Panc1 (cell line): ENCODE measurements at regions of chr18 and their contacts with region 1.

Region 1: GRCh38 chr18:78138983-78139496 is 840.6 kb upstream of the SALL3 start:
- DNase-seq: no peak
- ATAC-seq: no peak
- H3K4me3 ChIP-seq: no peak overlapping the region
- H3K27ac ChIP-seq: no peak overlapping the region
- H3K4me1 ChIP-seq: no peaks in the 10 kb centered on the region
- H3K27me3 ChIP-seq: peaks cover 2% of the 10 kb centered on the region; the same call in 1 of the 2 replicates
- CTCF ChIP-seq: no peak

Region 2: GRCh38 chr18:78153362-78153761 is 14.3 kb after region 1 on chr18:
- CTCF ChIA-PET with region 1: no interaction called
- POLR2A ChIA-PET with region 1: no interaction called
- in situ Hi-C with region 1: no loop called
- intact Hi-C with region 1: no loop called
- DNase-seq: no peak
- ATAC-seq: no peak
- H3K4me3 ChIP-seq: no peak overlapping the region
- H3K27ac ChIP-seq: no peak overlapping the region
- H3K4me1 ChIP-seq: no peaks in the 10 kb centered on the region
- H3K27me3 ChIP-seq: no peaks in the 10 kb centered on the region
- CTCF ChIP-seq: no peak

Region 3: GRCh38 chr18:78163922-78164321 is 24.9 kb after region 1 on chr18:
- CTCF ChIA-PET with region 1: no interaction called
- POLR2A ChIA-PET with region 1: no interaction called
- in situ Hi-C with region 1: no loop called
- intact Hi-C with region 1: loop called (anchors 1 kb)
- DNase-seq: no peak
- ATAC-seq: no peak
- H3K4me3 ChIP-seq: no peak overlapping the region
- H3K27ac ChIP-seq: no peak overlapping the region
- H3K4me1 ChIP-seq: no peaks in the 10 kb centered on the region
- H3K27me3 ChIP-seq: 0 out of 2 replicates have a peak, but pooled peaks cover 3% of the 10 kb centered on the region
- CTCF ChIP-seq: no peak